Activated naive CD4-positive, alpha-beta T cell treated with anti-CD3 and anti-CD28 coated beads, Interleukin-2, amount 10 ng/mL, durations not matched to agents 7 days and 5 days (primary cell): ENCODE measurements at regions of chr2 and their contacts with region 1.

Region 1: DNA sequence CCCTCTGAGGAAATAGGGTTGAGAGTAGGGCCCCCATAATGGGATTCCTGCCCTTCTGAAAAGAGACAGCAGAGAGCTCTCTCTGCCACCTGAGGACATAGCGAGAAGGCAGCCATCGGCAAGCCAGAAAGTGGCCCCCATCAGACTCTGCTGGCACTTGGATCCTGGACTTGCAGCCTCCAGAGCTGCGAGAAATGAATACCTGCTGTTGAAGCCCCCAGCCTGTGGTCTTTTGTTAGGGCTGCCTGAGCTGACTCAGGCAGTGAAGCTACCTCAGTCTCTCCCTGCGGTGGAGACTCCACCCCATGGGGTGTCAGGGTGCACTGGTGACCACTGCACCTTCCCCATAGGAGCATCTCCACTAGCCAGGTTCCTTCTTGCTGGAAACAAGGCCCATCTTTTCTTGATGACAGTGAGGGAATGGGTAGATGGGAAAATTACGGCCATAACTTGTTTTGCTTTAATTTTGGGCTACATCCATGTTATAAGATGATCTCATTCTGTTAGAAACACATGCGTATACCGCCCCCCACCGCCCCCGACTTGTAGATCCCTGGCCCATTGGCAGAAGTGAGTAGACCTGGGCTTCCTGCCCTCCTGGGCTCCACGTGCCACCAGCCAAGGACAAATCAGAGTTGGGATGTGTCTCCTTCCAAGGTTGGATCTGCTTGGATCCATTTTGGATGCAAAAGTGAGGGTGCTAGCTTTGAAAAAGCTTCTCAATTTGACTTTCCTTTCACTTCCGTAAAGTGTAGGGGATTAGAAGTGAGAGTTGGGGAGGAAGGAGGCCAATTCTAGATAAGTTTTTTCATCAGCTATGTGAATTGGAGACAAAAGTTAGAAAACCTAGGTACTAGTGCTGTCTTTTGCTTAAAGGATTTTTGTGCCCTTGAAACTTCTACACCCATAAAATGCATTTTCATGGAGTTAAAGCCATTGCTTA is 42.9 kb downstream of the NCK2 start:
- DNase-seq: no peak
- H3K4me3 Mint-ChIP-seq: no peak overlapping the region
- H3K27ac Mint-ChIP-seq: peak overlapping the region; percentile 81
- H3K4me1 Mint-ChIP-seq: peaks cover 98% of the 10 kb centered on the region
- H3K27me3 Mint-ChIP-seq: no peaks in the 10 kb centered on the region

Region 2: DNA sequence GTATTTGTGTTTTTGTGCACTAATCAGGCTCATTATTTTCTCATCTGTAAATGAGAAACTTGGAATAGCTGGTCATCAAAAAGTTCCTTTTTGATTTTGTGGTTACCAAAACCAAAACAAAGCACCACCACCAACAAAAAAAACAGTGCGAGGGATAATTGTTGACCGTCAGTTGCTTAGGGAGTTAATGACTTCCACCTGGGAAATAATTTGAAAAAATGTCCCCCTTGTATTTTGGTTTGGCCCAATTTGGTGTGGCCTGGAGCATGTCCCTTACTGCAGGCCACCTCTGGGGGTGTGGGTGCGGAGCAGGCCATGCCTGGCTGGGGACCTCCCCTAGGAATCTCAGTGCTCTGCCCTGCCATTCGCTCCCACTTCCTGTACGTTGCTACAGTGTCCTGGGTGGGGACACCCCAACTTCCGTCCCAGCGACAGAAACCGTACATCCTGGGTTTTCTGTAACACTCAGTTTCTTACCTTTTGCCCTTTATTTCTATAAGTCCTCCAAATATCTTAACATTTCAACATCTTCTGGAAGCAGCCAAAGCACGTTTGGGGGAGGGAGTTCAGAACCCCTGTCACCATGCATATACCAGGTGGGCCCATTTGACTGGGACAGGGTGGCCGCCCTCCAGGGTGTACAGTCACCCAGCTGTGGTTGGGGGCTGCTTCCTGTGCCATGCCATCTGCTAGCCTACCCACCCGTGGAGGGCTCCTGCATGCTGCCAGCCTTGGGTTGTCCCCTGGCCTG is 11.7 kb before region 1 on chr2:
- CTCF ChIA-PET with region 1: interaction called, 12 read pairs
- DNase-seq: peak; percentile 59
- H3K4me3 Mint-ChIP-seq: peak overlapping the region; percentile 68
- H3K27ac Mint-ChIP-seq: peak overlapping the region; percentile 91
- H3K4me1 Mint-ChIP-seq: peaks cover 94% of the 10 kb centered on the region
- H3K27me3 Mint-ChIP-seq: no peaks in the 10 kb centered on the region

Region 3: DNA sequence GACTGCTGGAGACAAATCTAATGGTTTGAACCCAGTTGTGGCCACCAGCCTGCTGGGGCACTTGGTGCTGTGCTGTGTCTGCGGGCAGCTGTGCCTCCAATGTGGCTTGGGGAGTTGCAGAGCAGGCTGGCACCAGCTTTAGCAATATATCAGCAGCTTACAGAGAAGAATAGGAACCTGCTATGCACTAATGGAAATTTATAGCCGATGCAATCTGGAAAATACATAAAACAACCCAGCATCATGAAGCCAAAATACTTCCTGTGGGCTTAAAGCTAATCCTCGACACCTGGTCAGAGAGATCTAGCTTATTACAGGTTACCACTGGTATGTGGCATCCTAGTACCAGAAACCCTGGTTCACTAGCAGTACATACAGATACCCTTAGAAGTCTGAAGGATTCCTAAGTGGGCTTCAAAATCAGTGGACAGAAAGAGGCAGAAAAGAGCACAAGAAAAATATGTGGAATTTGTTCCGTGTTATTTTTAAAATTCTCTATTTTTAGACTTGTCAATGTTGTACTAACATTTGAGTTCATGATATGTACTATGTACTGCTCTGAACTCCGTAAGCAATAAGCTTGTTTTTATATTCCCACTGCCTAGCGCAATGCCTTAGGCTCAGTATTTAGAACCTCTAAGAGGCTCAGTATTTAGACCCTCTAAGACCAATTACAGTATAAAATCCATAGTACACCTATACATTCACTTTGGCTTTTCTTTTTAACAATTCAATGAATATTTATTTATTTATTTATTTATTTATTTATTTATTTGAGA is 211.8 kb after region 1 on chr2:
- CTCF ChIA-PET with region 1: no interaction called
- DNase-seq: no peak
- H3K4me3 Mint-ChIP-seq: no peak overlapping the region
- H3K27ac Mint-ChIP-seq: no peak overlapping the region
- H3K4me1 Mint-ChIP-seq: peaks cover 4% of the 10 kb centered on the region
- H3K27me3 Mint-ChIP-seq: peaks cover 17% of the 10 kb centered on the region